AG04450 (cell line): ENCODE measurements at regions of chr5 and their contacts with region 1.

Region 1: GRCh38 chr5:173615884-173616576 is 420 bp downstream of the BOD1 start:
- DNase-seq: peak; percentile 54
- H3K4me3 ChIP-seq: peak overlapping the region; percentile 76
- H3K27ac ChIP-seq: peak overlapping the region; percentile 92
- H3K27me3 ChIP-seq: no peaks in the 10 kb centered on the region
- CTCF ChIP-seq: peak; percentile 77

Region 2: DNA sequence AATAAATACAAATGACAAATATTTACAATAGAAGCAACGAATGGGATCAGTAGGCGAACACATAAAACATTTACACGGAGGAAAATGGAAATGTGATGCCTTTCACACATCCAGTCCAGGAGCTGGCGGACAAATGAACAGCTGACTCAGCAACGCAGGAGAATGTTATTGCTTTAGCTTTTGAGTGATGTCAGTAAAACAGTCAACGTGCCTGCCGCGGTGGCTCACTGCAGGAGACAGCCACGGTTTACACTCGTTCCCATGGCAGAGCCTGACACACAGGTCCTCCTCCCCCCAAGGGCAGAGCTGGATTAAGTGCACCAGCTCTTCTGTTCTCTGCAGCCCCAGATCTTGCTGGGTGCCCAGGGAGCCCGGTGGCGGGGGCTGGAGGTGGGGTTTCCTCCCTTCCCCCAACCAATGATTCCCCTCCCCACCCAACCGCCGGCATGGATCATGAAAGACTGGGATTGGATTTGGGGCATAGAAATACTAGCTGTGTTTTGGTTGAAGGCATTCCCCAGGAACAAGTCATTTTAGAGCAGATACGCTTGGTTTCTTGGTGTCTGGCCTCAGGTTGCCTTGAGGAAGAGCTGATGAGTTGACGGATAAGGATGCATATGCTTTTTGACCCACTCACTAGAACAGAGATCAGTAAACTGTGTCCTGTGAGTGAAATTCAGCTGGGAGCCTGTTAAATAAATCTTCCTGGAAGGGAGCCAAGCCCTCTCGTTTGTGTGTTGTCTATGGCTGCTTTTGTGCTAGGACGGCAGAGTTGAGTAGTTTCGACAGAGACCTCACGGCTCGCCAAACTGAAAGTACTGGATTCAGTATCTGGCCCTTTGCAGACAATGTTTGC is 300.3 kb before region 1 on chr5:
- CTCF ChIA-PET with region 1: interaction called, 17 read pairs
- POLR2A ChIA-PET with region 1: interaction called, 3 read pairs
- DNase-seq: peak; percentile 67
- H3K4me3 ChIP-seq: peak overlapping the region; percentile 1; the same call in 1 of the 2 replicates
- H3K27ac ChIP-seq: peak overlapping the region; percentile 86
- H3K27me3 ChIP-seq: no peaks in the 10 kb centered on the region
- CTCF ChIP-seq: no peak

Region 3: DNA sequence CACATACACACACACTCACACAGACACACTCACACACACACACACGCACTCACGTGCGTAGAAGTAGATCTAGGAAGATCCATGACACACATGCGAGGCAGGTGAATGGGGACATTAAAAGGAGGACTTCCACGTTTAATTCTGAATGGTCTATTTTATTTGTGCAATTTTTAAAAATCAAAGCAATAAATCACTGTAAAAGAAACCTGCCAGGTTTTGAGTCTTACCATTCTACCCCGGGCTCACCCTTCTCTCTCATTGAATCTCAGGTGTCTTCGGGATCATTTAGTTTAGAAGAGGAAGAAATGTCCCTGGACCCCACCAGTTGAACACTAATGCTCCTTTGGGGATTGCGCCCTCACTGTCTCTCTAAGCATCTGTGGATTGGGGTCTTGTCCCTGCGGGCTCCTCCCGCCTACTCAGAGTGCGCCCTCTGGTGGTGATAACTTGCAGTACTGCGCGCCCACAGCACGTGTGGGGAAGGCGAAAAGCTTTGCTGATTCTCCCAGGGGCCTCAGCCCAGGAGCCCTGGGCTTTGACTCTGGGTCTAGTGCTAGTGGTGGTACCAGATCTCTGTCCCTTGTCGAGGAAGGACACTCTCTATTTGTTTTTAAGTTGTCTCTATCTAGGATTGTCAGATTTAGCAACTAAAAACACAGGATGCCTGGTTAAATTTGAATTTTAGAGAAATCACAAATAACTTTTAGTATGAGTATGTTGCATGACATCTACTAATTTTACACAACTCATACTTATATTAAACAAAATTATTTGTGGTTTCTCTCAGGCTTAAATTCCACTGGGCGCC is 34.4 kb before region 1 on chr5:
- CTCF ChIA-PET with region 1: interaction called, 13 read pairs
- POLR2A ChIA-PET with region 1: no interaction called
- DNase-seq: no peak
- H3K4me3 ChIP-seq: no peak overlapping the region
- H3K27ac ChIP-seq: no peak overlapping the region
- H3K27me3 ChIP-seq: no peaks in the 10 kb centered on the region
- CTCF ChIP-seq: peak; percentile 82

Region 4: DNA sequence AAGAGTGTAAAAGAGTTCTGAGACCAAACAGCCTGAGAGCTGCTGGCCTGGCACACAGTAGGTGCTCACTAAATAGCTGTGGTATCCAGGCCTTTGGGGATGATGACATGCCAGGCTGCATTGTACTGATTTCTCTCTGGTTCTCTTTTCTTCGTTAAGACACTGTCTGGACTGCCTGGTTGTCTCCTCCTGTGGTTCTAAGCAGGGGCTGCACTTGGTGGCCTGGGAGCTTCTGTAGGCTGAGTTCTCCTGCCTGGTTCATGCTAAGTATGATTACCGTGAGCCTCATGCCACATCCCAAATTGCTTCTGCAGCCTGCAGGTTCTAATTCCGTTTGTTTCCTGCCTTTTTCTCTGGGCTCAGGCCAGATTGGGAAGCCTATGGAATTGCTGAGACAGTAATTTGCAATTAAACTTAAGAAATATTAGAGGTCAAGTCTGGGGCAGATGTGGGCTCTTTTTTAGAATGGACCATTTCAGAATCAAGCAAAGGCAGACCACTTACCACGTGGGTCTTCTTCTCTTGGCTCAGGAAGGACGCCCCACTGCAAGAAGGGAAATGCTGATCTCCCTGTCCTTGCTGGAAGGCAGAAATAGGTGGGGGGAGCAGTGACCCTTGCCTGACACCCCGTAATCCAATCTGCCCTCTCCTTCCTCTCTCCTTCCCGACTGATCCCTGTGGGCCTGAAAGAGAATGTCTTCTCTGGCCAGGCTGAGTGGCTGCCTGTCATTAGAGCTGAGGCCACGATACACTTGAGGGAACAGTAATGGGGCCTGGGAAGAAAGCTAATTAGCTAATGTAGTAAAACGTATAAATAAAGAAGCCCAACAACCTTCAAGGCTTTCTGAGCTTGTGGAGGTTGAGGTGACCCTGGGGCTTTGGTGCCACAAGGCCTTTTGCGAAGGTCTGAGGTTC is 22.4 kb after region 1 on chr5:
- CTCF ChIA-PET with region 1: no interaction called
- POLR2A ChIA-PET with region 1: no interaction called
- DNase-seq: no peak
- H3K4me3 ChIP-seq: no peak overlapping the region
- H3K27ac ChIP-seq: no peak overlapping the region
- H3K27me3 ChIP-seq: peaks cover 8% of the 10 kb centered on the region
- CTCF ChIP-seq: no peak

Region 5: GRCh38 chr5:173697931-173698579 is 82.0 kb after region 1 on chr5:
- CTCF ChIA-PET with region 1: no interaction called
- POLR2A ChIA-PET with region 1: no interaction called
- DNase-seq: no peak
- H3K4me3 ChIP-seq: no peak overlapping the region
- H3K27ac ChIP-seq: no peak overlapping the region
- H3K27me3 ChIP-seq: peaks cover 14% of the 10 kb centered on the region
- CTCF ChIP-seq: no peak

Region 6: GRCh38 chr5:173925448-173926071 is 309.5 kb after region 1 on chr5:
- CTCF ChIA-PET with region 1: interaction called, 11 read pairs
- POLR2A ChIA-PET with region 1: no interaction called
- DNase-seq: no peak
- H3K4me3 ChIP-seq: no peak overlapping the region
- H3K27ac ChIP-seq: no peak overlapping the region
- H3K27me3 ChIP-seq: no peaks in the 10 kb centered on the region
- CTCF ChIP-seq: peak; percentile 60

Region 7: DNA sequence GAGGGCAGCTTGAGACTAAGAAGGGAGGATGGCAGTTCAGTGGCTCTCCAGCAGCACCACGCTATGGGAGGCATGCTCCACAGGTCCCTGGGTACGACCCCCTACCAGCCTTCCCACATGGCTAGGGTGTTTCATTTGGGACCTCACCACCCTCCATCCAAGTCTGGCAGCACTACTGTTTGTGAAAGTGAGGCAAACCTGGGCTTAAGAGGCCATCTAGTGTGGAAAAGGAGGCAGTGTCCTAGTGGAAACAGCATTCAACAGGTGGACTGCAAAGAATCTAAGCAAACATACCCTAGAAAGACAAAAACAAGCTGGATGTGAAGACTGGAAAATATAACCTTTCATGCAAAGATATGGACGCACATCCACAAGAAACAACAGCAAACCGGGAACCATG is 368.2 kb after region 1 on chr5:
- CTCF ChIA-PET with region 1: interaction called, 24 read pairs
- POLR2A ChIA-PET with region 1: no interaction called
- DNase-seq: no peak
- H3K4me3 ChIP-seq: no peak overlapping the region
- H3K27ac ChIP-seq: no peak overlapping the region
- H3K27me3 ChIP-seq: peaks cover 15% of the 10 kb centered on the region
- CTCF ChIP-seq: peak; percentile 51